ENCODE measurements at regions of chr2 and their contacts with region 1.

Region 1: DNA sequence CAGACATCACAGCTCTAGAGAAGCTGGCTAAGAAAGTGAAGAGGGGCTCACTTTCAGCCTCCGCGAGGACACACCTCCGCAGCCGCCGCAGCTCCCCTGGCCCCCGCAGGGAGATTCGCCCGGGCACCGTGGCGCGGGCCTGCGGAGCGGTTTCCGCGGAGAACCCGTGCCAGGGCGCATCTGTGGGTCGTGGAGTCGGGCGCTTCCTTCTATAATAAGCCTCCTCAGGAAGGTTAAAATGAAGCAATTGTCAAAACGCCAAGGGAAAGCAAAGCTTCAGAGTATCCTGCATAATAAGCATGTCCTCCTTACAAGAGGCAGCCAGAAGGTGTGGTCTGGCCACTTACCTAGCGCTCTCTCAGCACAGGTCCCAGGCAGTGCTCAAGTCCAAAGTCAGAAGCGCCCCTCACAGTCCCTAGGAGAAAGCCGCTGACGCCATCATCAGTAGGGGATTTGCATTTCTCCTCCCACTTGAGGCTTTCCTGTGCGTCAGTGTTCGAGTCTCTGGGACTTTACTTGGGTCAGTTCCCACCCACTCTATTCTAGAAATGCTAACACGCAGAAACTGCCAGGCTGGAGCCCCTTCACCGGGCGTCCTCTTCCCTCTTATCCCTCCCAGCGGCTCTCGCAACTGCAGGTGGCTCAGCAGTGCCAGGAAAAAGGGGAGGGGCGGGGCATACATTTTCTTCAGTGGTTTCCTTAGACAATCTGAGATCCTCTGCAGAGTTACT is at the start of gene STAT4:
- DNase-seq: peak; percentile 72
- CTCF ChIP-seq: peak; percentile 13

Region 2: DNA sequence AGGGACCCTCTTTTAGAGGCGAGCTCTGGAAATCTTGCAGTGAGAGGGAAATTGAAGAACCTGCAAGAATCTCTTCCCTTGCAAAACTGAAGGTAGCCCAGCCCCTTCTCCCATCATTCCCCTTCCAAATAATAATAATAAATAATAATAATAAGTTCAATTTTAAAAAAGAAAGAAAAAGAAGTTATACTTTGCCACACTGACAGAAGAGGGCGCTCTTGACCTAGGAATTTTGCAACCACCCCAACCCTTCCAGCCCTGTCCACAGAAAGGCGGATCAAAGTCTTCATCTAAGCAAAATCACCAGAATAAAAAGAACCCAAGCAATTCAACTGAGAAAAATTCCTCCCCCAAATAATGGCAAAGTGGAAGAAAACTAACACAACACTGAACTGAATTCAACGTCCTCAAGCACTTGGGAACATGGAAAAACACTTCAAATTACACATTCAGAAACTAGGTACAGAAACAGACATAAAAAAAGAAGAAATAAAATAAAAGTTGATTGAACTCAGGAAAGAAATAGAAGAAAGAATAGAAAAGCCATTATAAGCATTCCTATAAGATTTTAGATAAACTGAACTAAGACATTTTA is 369.1 kb before region 1 on chr2:
- CTCF ChIA-PET with region 1: interaction called, 16 read pairs
- POLR2A ChIA-PET with region 1: no interaction called
- DNase-seq: peak; percentile 56
- CTCF ChIP-seq: peak; percentile 44

Region 3: GRCh38 chr2:190996338-190996946 is 154.3 kb before region 1 on chr2:
- CTCF ChIA-PET with region 1: no interaction called
- POLR2A ChIA-PET with region 1: no interaction called
- DNase-seq: no peak
- CTCF ChIP-seq: peak; percentile 34

Region 4: DNA sequence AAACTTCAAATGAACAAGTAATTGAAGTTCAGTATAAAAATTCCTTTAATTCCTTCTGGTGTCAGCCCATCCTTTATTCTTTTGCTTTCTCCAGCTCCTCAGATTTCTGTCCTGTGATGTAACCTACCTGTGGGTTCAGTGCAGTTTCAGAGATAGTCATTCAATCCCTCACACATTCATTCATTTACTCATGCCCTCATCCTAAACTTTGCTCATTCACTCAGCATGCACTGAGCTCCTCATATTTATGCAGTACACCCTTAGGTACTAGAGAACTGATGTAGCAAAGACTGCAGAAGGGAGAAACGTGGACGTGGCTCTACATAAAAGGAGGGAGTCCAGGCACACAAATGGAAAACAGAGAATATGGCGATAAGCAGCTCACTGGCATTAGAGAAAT is 91.5 kb before region 1 on chr2:
- CTCF ChIA-PET with region 1: interaction called, 187 read pairs
- POLR2A ChIA-PET with region 1: no interaction called
- DNase-seq: no peak
- CTCF ChIP-seq: no peak

Region 5: DNA sequence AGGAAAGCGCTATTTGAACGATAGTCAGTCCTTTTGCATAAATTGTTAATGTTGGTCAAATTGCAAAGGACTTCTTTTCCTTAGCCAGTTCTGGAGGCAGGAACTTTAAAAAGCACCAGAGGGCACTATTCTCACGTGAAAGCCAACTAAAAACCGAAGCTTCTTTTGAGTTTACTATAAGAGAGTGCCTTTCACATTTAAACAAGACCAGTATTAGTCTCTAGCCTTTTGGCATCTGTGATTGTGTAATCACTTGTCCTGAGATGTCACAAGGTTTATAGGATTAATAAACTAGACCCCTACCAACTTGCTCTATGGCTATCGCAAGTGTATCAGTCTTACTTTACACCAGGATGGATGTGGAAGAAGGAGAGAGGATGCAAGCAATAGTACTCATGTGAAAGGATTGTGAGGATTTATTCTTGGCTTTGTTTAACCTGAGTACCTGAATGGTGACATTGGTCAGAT is 14.4 kb after region 1 on chr2:
- CTCF ChIA-PET with region 1: interaction called, 41 read pairs
- POLR2A ChIA-PET with region 1: no interaction called
- DNase-seq: peak; percentile 31
- CTCF ChIP-seq: peak; percentile 45

Region 6: DNA sequence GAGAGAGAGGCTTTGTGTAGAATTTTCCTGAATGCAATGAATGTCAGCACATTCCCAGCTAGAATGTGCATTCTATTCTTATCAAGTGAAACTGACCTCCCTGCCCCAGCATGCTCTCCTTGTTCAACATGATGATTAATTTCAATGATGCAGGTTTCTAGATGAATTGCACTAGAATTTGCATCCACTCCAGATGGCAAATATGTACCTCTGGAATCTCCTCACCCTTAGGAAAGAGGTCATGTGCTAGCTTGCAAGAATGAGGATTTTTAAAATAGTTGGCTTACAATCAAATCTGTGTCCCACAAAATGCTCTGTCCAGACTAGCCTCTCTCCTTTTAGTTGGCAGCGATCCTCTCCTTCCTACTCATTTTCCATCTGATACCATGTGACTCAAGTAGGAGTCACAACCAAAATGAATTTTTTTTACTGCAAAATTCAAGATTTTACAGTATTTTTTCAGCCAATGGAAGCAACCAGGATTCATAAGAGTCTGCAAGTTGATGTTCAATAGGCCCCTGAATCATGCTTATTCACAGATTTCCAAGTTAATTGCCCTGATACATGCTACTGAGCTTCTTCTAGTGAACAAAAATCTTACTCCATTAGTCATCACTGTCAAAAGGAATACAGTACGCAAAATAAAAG is 21.1 kb after region 1 on chr2:
- CTCF ChIA-PET with region 1: interaction called, 41 read pairs
- POLR2A ChIA-PET with region 1: no interaction called
- DNase-seq: no peak
- CTCF ChIP-seq: no peak

Region 7: GRCh38 chr2:191299010-191299409 is 148.2 kb after region 1 on chr2:
- CTCF ChIA-PET with region 1: no interaction called
- POLR2A ChIA-PET with region 1: no interaction called
- DNase-seq: no peak
- CTCF ChIP-seq: no peak

Measured in GM10248 (cell line).